B cell (primary cell): ENCODE measurements at regions of chr17 and their contacts with region 1.

Region 1: GRCh38 chr17:8376271-8377067 is at the start of gene KRABD2:
- DNase-seq: peak; percentile 90
- ATAC-seq: peak; percentile 100
- H3K4me3 ChIP-seq: peak within 1 kb of the TSS; percentile 81 to 92 (median 87)
- H3K4me3 Mint-ChIP-seq: peak within 1 kb of the TSS; percentile 92
- H3K27ac ChIP-seq: peak within 1 kb of the TSS; percentile 53 to 86
- H3K27ac Mint-ChIP-seq: peak within 1 kb of the TSS; percentile 91
- H3K4me1 ChIP-seq: peaks cover 31 to 33% of the 10 kb centered on the region in 2 donors
- H3K4me1 Mint-ChIP-seq: peaks cover 48% of the 10 kb centered on the region
- H3K27me3 ChIP-seq: no peaks in the 10 kb centered on the region
- H3K27me3 Mint-ChIP-seq: no peaks in the 10 kb centered on the region
- CTCF ChIP-seq: peak; percentile 76

Region 2: DNA sequence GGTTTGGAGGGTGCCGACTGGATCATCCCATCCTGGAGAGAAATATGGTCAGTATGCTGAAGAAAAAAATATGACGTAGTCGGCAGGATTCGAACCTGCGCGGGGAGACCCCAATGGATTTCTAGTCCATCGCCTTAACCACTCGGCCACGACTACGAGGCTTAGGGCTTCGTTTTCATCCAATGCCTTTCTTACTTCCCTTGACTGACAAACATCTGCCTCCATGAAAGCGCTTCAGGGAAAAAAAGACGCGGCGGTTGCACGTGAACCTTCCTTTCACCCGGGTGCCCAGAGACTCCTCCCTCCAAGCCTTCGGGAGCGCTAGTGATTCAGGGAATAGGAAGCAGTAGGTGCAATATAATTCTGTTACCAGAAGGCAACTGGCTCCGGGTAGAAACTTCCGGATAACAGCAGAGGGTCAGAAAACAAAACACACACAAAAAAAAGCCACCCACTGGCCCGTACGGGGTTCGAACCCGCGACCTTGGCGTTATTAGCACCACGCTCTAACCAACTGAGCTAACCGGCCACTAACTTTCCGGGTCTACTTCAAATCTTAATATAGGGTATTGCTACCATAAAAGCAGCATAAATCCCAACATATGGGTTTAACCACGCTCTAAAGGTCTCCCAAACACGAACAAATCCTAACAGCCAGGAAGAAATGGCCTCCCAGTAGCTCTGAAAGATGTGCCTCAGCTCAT is 149.8 kb before region 1 on chr17:
- CTCF ChIA-PET with region 1: no interaction called
- POLR2A ChIA-PET with region 1: no interaction called
- intact Hi-C with region 1: no loop called
- DNase-seq: peak; percentile 66
- ATAC-seq: no peak
- H3K4me3 ChIP-seq: peak overlapping the region in 3 of 5 experiments; percentile 2 to 40 (median 9)
- H3K4me3 Mint-ChIP-seq: peak overlapping the region; percentile 49
- H3K27ac ChIP-seq: peak overlapping the region; percentile 26 to 63
- H3K27ac Mint-ChIP-seq: peak overlapping the region; percentile 78
- H3K4me1 ChIP-seq: peaks cover 32 to 35% of the 10 kb centered on the region in 2 donors
- H3K4me1 Mint-ChIP-seq: peaks cover 50% of the 10 kb centered on the region
- H3K27me3 ChIP-seq: no peaks in the 10 kb centered on the region
- H3K27me3 Mint-ChIP-seq: no peaks in the 10 kb centered on the region
- CTCF ChIP-seq: no peak

Region 3: GRCh38 chr17:8288336-8289102 is 88.0 kb before region 1 on chr17 and contains the start of gene RANGRF:
- CTCF ChIA-PET with region 1: interaction called, 3 read pairs
- POLR2A ChIA-PET with region 1: no interaction called
- intact Hi-C with region 1: loop called (anchors 1 kb)
- DNase-seq: peak; percentile 88
- ATAC-seq: peak; percentile 88
- H3K4me3 ChIP-seq: peak within 1 kb of the TSS; percentile 76 to 98 (median 86)
- H3K4me3 Mint-ChIP-seq: peak within 1 kb of the TSS; percentile 92
- H3K27ac ChIP-seq: peak within 1 kb of the TSS; percentile 92
- H3K27ac Mint-ChIP-seq: peak within 1 kb of the TSS; percentile 98
- H3K4me1 ChIP-seq: peaks cover 22 to 32% of the 10 kb centered on the region in 2 donors
- H3K4me1 Mint-ChIP-seq: peaks cover 51% of the 10 kb centered on the region
- H3K27me3 ChIP-seq: no peaks in the 10 kb centered on the region
- H3K27me3 Mint-ChIP-seq: no peaks in the 10 kb centered on the region
- CTCF ChIP-seq: no peak
- total RNA-seq, gene RANGRF: 46.8 and 48.8 TPM in 2 replicates